Activated T-helper 1 cell treated with anti-CD3 and anti-CD28 coated beads, Interleukin-12 subunit alpha, Interleukin-12 subunit beta, Interleukin-2, Interleukin-4 antibody, amounts not matched to agents 30 ng/mL and 10 ng/mL and 1 ng/mL, durations not matched to agents 14 hours and 24 hours and 36 hours (primary cell): ENCODE measurements at regions of chr1 and their contacts with region 1.

Region 1: GRCh38 chr1:110674337-110675059 is at the start of gene KCNA3:
- DNase-seq: peak; percentile 68
- H3K4me3 Mint-ChIP-seq: peak within 1 kb of the TSS; percentile 100
- H3K27ac Mint-ChIP-seq: peak within 1 kb of the TSS; percentile 92
- H3K4me1 Mint-ChIP-seq: peaks cover 67% of the 10 kb centered on the region
- H3K27me3 Mint-ChIP-seq: no peaks in the 10 kb centered on the region
- total RNA-seq, gene KCNA3: 38.1 and 42.2 TPM in 2 replicates

Region 2: DNA sequence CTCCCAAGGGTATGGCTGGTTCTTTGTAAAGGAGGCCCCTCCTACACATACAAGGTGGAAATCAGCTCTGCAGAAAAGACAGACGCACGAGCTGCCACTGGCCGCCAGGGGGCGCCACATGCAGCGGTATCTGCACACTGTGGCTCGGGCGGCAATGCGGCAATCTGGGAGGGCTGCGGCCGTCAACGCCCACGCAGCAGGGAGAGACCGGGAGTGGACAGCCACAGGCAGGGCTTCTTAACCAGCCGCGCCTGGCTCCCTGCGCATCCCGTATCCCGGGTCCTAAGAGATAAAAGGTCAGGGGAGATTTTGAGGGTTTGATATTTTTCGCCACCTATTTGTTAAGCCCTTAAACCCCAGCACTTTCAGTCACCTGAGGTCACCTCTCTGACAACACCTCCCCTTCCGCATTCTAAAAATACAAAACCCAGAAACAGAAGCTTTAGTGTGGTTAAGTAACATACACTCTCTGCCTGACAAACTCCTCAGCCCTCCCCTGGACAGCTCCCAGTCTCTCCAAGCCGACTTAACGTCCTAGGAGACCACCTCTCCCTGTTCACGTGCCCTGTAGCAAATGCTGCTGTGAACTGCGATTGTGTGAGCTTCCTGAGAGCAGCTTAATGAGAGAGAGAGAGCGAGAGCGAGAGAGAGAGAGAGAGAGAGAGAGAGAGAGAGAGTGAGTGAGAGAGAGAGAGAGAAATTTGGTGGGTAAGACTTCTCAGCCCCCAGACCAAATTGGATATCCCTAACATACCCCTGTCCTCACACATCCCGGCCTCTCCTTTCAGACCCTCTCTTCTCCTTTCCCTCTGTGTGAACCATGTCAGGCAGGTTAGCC is 54.9 kb before region 1 on chr1:
- intact Hi-C with region 1: loop called (anchors 1 kb)
- DNase-seq: peak; percentile 87
- H3K4me3 Mint-ChIP-seq: peak overlapping the region; percentile 83
- H3K27ac Mint-ChIP-seq: peak overlapping the region; percentile 90
- H3K4me1 Mint-ChIP-seq: peaks cover 63% of the 10 kb centered on the region
- H3K27me3 Mint-ChIP-seq: peaks cover 4% of the 10 kb centered on the region

Region 3: GRCh38 chr1:110645821-110646735 is 28.4 kb before region 1 on chr1:
- intact Hi-C with region 1: loop called (anchors 1 kb)
- DNase-seq: no peak
- H3K4me3 Mint-ChIP-seq: peak overlapping the region; percentile 56
- H3K27ac Mint-ChIP-seq: peak overlapping the region; percentile 81
- H3K4me1 Mint-ChIP-seq: peaks cover 53% of the 10 kb centered on the region
- H3K27me3 Mint-ChIP-seq: no peaks in the 10 kb centered on the region

Region 4: DNA sequence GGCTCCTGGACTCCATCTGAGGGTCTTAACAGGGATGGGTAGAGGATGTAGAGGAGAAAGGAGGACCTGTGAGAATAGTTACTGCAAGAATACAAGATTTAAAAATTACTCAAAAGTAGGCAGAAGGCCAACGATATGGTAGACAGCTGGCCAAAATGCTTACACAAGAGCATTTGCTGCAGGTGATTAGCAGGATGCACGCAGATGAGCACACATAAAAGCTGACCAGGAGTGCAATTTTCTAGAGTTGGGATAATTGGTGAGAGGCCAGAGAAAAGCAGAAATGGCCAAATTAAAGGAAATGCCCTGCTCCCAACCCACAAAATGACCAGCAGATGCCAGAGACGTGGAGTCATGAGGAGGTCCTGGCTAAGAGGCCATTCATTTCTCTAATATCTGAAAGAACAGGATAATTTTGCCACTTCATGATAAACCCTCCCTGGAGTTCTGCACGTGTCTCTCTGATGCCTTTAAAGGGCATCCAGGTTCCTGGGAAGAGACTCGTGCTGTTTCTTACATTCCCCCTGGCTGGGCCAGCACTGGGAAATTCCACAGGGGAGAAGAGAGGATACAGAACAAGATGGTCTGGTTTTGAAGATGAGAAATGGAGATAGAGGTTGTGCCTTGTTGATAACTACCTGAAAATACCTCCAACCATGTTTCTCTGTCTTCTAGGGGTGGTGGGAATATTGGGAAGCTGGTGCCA is 62.6 kb after region 1 on chr1:
- intact Hi-C with region 1: no loop called
- DNase-seq: no peak
- H3K4me3 Mint-ChIP-seq: no peak overlapping the region
- H3K27ac Mint-ChIP-seq: no peak overlapping the region
- H3K4me1 Mint-ChIP-seq: no peaks in the 10 kb centered on the region
- H3K27me3 Mint-ChIP-seq: peaks cover 12% of the 10 kb centered on the region

Region 5: GRCh38 chr1:110766025-110766647 is 91.6 kb after region 1 on chr1:
- intact Hi-C with region 1: loop called (anchors 1 kb)
- DNase-seq: peak; percentile 34
- H3K4me3 Mint-ChIP-seq: no peak overlapping the region
- H3K27ac Mint-ChIP-seq: no peak overlapping the region
- H3K4me1 Mint-ChIP-seq: peaks cover 14% of the 10 kb centered on the region
- H3K27me3 Mint-ChIP-seq: peaks cover 17% of the 10 kb centered on the region

Region 6: GRCh38 chr1:110963691-110964399 is 289.3 kb after region 1 on chr1 and contains the start of gene LRIF1:
- intact Hi-C with region 1: loop called (anchors 5 kb)
- DNase-seq: peak; percentile 100
- H3K4me3 Mint-ChIP-seq: peak within 1 kb of the TSS; percentile 90
- H3K27ac Mint-ChIP-seq: peak within 1 kb of the TSS; percentile 96
- H3K4me1 Mint-ChIP-seq: peaks cover 43% of the 10 kb centered on the region
- H3K27me3 Mint-ChIP-seq: peaks cover 2% of the 10 kb centered on the region
- total RNA-seq, gene LRIF1: 13.8 and 14.8 TPM in 2 replicates